ENCODE measurements at regions of chr1 and their contacts with region 1.

Region 1: DNA sequence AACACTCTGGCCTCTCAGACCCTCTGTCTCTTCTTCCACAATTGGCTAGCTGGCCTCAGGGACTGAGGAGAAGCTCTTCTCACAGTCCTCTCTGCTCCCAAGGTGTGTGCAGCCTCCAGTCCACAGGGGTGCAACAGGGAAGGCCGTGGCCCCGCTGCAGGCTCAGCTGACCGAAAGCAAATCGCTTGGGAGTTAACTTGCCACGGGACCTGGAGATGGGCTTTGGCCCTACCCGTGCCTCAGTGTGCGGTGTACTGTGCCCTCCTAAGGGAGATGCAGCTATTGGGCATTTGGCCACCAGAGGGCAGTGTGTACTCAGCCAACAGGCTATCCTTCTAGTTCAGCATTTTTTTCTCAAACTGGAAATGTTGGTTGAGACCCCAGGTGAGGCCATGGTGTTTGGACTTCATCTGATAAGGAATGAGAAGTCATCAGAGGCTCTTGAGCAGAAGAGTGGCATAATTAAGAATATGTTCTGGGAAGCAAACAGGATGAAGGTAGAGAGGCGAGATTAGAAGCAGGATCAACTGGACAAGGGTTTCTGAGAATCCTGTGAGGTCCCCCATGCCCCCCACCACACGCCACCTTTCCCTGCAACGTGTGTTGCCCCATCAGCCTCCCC is 42.5 kb upstream of the TMEM125 start:
- DNase-seq: peak; percentile 82 to 88 (median 87)
- ATAC-seq: peak; percentile 97
- H3K4me3 ChIP-seq: no peak overlapping the region
- H3K27ac ChIP-seq: no peak overlapping the region
- H3K4me1 ChIP-seq: 0 out of 5 replicates have a peak, but pooled peaks cover 0 to 3% of the 10 kb centered on the region in 2 experiments
- H3K27me3 ChIP-seq: peaks cover 12 to 55% of the 10 kb centered on the region in 2 experiments
- CTCF ChIP-seq: peak; percentile 90 to 98 (median 96)
- EP300 ChIP-seq: no peak
- POLR2A ChIP-seq: no peak
- RAD21 ChIP-seq: peak; percentile 95 to 98

Region 2: GRCh38 chr1:42913426-42914091 is 313.7 kb before region 1 on chr1:
- CTCF ChIA-PET with region 1: interaction called, 5 read pairs
- POLR2A ChIA-PET with region 1: no interaction called
- in situ Hi-C with region 1: no loop called
- intact Hi-C with region 1: loop called (anchors 5 kb)
- DNase-seq: peak; percentile 66 to 86 (median 69)
- ATAC-seq: peak; percentile 96
- H3K4me3 ChIP-seq: no peak overlapping the region
- H3K27ac ChIP-seq: no peak overlapping the region
- H3K4me1 ChIP-seq: peaks cover 0 to 7% of the 10 kb centered on the region in 2 experiments; a peak in 1 of 5 replicates
- H3K27me3 ChIP-seq: no peaks in the 10 kb centered on the region
- CTCF ChIP-seq: peak; percentile 67 to 85 (median 83)
- EP300 ChIP-seq: no peak
- POLR2A ChIP-seq: no peak
- RAD21 ChIP-seq: peak; percentile 83 to 99

Region 3: GRCh38 chr1:43358746-43359693 is 131.8 kb after region 1 on chr1 and contains the start of gene CDC20:
- CTCF ChIA-PET with region 1: interaction called, 4 read pairs
- POLR2A ChIA-PET with region 1: interaction called, 4 read pairs
- in situ Hi-C with region 1: no loop called
- intact Hi-C with region 1: loop called (anchors 1 kb)
- DNase-seq: peak; percentile 97 to 100 (median 98)
- ATAC-seq: peak; percentile 97
- H3K4me3 ChIP-seq: peak within 1 kb of the TSS; percentile 83
- H3K27ac ChIP-seq: peak within 1 kb of the TSS; percentile 90
- H3K4me1 ChIP-seq: peaks cover 25 to 36% of the 10 kb centered on the region in 2 experiments
- H3K27me3 ChIP-seq: no peaks in the 10 kb centered on the region
- CTCF ChIP-seq: no peak; a peak in 1 of 6 replicates
- EP300 ChIP-seq: peak; percentile 56; the same call in 1 of the 2 replicates
- POLR2A ChIP-seq: peak; percentile 90
- RAD21 ChIP-seq: no peak
- polyA plus RNA-seq, gene CDC20: 45.2 to 70.6 TPM

Region 4: DNA sequence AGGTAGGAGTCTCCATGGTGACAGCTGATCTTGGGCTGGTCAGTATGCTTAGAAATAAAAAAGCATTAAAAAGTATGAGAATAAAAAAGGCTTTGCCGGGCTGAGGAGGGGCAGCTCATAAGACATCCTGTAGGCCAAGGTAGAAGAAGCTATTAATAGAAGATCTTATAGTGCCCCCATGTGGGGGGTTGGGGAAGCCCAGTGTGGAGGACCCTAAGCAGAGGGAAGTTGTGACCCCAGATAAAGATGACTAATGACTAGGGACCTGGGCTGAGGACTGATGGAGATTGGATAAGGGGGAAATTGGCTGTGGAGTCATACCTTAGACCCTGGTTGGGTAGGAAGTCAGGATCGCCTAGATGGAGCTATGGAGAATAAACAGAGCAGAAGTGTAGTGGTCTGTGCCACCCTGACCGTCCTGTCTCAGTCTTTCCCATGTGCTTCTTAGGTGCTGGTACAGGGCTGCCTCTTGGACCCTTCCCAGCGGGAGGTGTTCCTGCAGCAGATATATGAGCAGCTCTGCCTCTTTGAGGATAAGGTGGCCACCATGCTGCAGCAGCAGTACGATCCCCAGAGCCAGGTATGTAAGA is 187.5 kb after region 1 on chr1:
- CTCF ChIA-PET with region 1: interaction called, 63 read pairs
- POLR2A ChIA-PET with region 1: interaction called, 5 read pairs
- in situ Hi-C with region 1: loop called (anchors 5 kb)
- intact Hi-C with region 1: loop called (anchors 1 kb)
- DNase-seq: peak; percentile 82 to 92 (median 90)
- ATAC-seq: peak; percentile 99
- H3K4me3 ChIP-seq: no peak overlapping the region
- H3K27ac ChIP-seq: no peak overlapping the region
- H3K4me1 ChIP-seq: no peaks in the 10 kb centered on the region; a peak in 1 of 5 replicates
- H3K27me3 ChIP-seq: no peaks in the 10 kb centered on the region
- CTCF ChIP-seq: peak; percentile 79 to 95 (median 93)
- EP300 ChIP-seq: no peak
- POLR2A ChIP-seq: no peak
- RAD21 ChIP-seq: peak; percentile 90 to 95

Region 5: DNA sequence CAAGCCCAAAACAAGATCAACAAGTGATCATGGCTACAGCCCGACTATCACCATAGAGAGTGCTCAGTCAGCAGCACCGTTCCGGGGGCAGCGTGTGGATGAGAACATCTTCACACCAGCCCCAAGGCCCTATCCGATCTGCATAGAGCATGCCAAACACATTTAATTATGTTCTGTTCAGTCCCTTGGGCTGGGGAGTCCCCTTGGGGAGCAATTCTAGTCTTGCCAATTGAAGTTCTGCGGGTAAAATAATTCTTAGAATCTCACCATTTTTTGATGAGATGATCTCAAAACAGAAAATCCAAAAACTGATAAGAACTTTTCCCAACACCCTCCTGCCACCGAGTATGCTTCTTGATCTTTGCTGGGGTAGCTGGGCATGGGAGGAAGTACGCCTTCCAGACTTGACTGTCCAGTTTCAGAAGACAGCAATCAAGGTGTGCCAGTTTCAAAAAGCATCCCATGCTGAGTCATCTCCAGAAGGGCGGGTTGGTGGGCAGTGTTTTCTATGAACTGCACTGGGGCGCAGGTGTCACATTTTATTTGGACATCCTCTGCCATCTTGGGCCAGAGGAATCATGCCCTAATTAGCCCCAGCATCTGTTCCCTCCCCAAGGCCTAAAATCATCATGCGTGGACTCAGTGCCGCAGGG is 282.6 kb after region 1 on chr1:
- CTCF ChIA-PET with region 1: no interaction called
- POLR2A ChIA-PET with region 1: no interaction called
- in situ Hi-C with region 1: loop called (anchors 5 kb)
- intact Hi-C with region 1: no loop called
- DNase-seq: no peak
- ATAC-seq: no peak
- H3K4me3 ChIP-seq: no peak overlapping the region
- H3K27ac ChIP-seq: no peak overlapping the region
- H3K4me1 ChIP-seq: no peaks in the 10 kb centered on the region
- H3K27me3 ChIP-seq: peaks cover 31 to 81% of the 10 kb centered on the region in 2 experiments
- CTCF ChIP-seq: no peak
- EP300 ChIP-seq: no peak
- POLR2A ChIP-seq: no peak
- RAD21 ChIP-seq: no peak

Region 6: GRCh38 chr1:43522776-43523480 is 295.7 kb after region 1 on chr1:
- CTCF ChIA-PET with region 1: no interaction called
- POLR2A ChIA-PET with region 1: no interaction called
- in situ Hi-C with region 1: no loop called
- intact Hi-C with region 1: loop called (anchors 2 kb)
- DNase-seq: peak; percentile 93 to 99 (median 95)
- ATAC-seq: peak; percentile 92
- H3K4me3 ChIP-seq: no peak overlapping the region
- H3K27ac ChIP-seq: peak overlapping the region; percentile 37; the same call in 1 of the 3 replicates
- H3K4me1 ChIP-seq: peaks cover 30 to 33% of the 10 kb centered on the region in 2 experiments
- H3K27me3 ChIP-seq: peaks cover 5 to 33% of the 10 kb centered on the region in 2 experiments; a peak in 2 of 5 replicates
- CTCF ChIP-seq: 0 out of 6 replicates have a peak, but pooled peaks of 1 of the 3 experiments have one; percentile 12
- EP300 ChIP-seq: peak; percentile 99
- POLR2A ChIP-seq: no peak
- RAD21 ChIP-seq: peak in 1 of 2 experiments; percentile 12; a peak in 1 of 4 replicates

Measured in K562 (cell line).